ENCODE measurements at regions of chr1 and their contacts with region 1.

Region 1: DNA sequence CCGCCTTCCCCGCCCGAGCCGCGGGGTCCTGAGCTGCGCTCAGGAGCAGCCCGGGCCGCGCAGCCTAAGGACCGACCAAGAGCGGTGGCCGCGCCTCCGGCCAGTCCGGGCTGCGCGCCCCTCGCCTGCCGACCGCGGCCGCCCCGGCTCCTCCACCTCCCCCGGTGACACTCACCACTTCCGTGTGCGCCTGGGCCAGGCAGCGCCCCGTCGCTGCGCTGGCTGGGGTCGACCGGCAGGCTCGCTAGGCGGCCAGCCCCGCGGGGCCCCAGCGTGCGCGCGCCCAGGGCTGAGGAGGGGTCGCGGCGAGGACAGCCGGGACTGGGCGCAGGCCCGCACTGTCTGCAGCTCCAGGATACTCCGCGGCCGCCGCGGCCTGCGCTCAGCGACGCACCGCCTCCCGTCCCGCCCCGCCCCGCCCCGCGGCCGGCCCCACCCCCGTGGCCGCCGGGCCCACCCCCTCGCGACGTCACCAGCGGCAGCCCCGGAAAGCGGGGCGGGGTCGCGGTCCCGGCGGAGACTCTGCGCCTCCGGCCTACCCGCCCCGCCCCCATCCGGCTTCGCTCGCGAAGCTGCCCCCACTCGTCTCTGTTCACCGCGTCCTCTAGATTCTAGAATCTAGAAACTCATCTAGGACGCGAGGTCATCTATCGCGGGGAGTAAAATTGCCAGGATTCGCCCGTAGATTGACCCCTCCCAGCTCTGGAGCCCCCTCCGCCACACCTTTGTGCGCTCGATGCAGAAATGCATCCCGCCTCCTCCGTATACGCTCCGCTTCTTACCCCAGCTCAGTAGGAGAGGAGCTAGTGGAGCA is at the start of gene JAK1:
- DNase-seq: peak; percentile 93
- ATAC-seq: peak; percentile 95 to 96
- total RNA-seq, gene JAK1: 83.7 to 98.7 TPM

Region 2: GRCh38 chr1:64711266-64711665 is 255.1 kb before region 1 on chr1:
- intact Hi-C with region 1: no loop called
- DNase-seq: no peak
- ATAC-seq: no peak

Region 3: GRCh38 chr1:64864018-64864940 is 102.1 kb before region 1 on chr1:
- intact Hi-C with region 1: loop called in 1 of 2 experiments (anchors 10 kb)
- DNase-seq: peak; percentile 82
- ATAC-seq: peak; percentile 83 to 90

Region 4: GRCh38 chr1:64877151-64877550 is 89.2 kb before region 1 on chr1:
- intact Hi-C with region 1: loop called in 1 of 2 experiments (anchors 5 kb)
- DNase-seq: no peak
- ATAC-seq: peak in 1 of 2 donors; percentile 23

Region 5: DNA sequence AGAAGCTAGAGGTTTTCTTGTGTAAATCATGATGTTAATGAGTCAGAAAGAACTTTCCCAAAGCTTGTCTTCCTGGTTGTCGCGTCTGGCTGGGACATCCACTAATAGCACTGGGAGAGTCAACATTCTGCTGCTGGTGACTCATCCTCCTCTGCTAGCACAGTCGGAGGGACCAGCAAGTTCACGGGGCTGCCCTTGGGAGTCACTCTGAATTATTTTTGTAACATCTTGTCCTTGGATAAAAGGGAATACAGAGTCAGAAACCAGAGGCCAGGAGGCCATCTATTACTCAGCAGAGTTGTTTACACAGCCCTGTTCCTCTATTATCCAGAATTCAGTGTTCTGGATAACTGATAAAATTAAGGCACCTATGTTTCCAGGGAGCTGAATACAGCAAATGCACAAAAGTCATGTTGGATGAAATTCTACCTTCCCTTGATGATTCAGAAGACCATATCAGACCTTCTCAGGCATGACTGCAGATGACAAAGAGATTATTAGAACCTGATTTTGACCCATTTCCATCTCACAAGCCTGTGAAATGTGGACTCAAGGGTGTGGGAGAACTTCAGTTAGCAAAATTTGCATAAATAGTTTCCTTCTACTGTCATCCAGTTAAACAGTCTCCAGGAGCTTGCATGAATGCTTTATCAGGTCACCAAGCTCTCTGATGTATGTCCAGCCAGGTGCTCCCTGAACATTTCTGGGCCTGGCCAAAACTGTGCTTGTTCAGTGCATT is 68.1 kb before region 1 on chr1:
- intact Hi-C with region 1: loop called in 1 of 2 experiments (anchors 5 kb)
- DNase-seq: peak; percentile 88
- ATAC-seq: peak; percentile 94 to 98

Measured in left cardiac atrium (tissue), 4 donors.